Esophagus muscularis mucosa (tissue), 4 donors: ENCODE measurements at regions of chr7 and their contacts with region 1.

Region 1: GRCh38 chr7:23013715-23014649 is at the start of gene HYCC1:
- DNase-seq: peak; percentile 100
- H3K4me3 ChIP-seq: peak within 1 kb of the TSS; percentile 80 to 98 (median 94)
- H3K27ac ChIP-seq: peak within 1 kb of the TSS; percentile 85 to 93 (median 88)
- H3K4me1 ChIP-seq: peaks cover 37 to 55% (median 41%) of the 10 kb centered on the region in 4 donors
- H3K27me3 ChIP-seq: no peaks in the 10 kb centered on the region
- CTCF ChIP-seq: peak; percentile 52 to 74 (median 71)
- EP300 ChIP-seq: no peak
- POLR2A ChIP-seq: peak; percentile 90
- total RNA-seq, gene HYCC1: 39.2 to 62.6 (median 47.2) TPM

Region 2: GRCh38 chr7:22822486-22823141 is 191.4 kb before region 1 on chr7 and contains the start of gene TOMM7:
- intact Hi-C with region 1: loop called (anchors 10 kb)
- DNase-seq: peak; percentile 95
- H3K4me3 ChIP-seq: peak within 1 kb of the TSS; percentile 72 to 85 (median 82)
- H3K27ac ChIP-seq: peak within 1 kb of the TSS; percentile 78 to 89 (median 86)
- H3K4me1 ChIP-seq: peaks cover 14 to 45% (median 36%) of the 10 kb centered on the region in 4 donors
- H3K27me3 ChIP-seq: no peaks in the 10 kb centered on the region
- CTCF ChIP-seq: peak; percentile 58 to 69 (median 62)
- EP300 ChIP-seq: no peak
- POLR2A ChIP-seq: peak; percentile 45
- total RNA-seq, gene TOMM7: 141 to 303 (median 267) TPM